Activated CD4-positive, alpha-beta memory T cell treated with anti-CD3 and anti-CD28 coated beads, Interleukin-2, amount 10 ng/mL, durations not matched to agents 7 days and 5 days (primary cell): ENCODE measurements at regions of chr2 and their contacts with region 1.

Region 1: DNA sequence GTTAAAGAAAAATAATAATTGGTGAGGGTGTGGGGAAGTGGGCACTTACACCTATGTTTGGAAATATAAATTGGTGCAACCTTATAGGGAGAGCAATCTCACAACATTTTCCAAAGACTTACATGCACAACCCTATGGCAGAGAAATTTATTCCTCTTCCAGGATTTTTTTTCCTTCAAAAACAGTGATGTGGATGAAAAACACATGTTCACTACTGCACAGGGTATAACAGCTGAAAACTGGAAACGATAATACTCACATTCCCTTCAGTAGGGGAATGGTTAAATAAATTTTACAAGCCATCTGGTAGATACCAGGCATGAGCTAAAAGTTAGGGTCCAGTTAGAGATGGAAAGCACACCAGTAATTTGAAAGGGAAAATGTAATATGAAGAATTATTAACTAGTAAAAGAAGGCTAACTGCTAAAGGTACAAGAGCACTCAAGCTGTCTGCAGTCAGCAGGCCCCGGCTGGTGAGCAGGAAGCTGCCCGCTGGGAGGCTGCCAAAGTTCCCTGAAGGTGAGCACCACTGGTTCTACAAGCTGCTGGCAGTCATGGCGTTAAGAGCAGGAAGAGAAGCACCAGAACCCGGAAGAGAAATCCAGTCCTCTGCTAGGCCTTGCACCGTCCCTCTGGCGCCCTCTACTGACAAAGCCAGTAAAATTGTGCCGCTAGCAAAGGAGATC is 28.4 kb upstream of the CASP8 start:
- DNase-seq: peak; percentile 92
- H3K4me3 Mint-ChIP-seq: peak overlapping the region; percentile 97
- H3K27ac Mint-ChIP-seq: peak overlapping the region; percentile 97
- H3K4me1 Mint-ChIP-seq: peaks cover 58% of the 10 kb centered on the region
- H3K27me3 Mint-ChIP-seq: no peaks in the 10 kb centered on the region

Region 2: DNA sequence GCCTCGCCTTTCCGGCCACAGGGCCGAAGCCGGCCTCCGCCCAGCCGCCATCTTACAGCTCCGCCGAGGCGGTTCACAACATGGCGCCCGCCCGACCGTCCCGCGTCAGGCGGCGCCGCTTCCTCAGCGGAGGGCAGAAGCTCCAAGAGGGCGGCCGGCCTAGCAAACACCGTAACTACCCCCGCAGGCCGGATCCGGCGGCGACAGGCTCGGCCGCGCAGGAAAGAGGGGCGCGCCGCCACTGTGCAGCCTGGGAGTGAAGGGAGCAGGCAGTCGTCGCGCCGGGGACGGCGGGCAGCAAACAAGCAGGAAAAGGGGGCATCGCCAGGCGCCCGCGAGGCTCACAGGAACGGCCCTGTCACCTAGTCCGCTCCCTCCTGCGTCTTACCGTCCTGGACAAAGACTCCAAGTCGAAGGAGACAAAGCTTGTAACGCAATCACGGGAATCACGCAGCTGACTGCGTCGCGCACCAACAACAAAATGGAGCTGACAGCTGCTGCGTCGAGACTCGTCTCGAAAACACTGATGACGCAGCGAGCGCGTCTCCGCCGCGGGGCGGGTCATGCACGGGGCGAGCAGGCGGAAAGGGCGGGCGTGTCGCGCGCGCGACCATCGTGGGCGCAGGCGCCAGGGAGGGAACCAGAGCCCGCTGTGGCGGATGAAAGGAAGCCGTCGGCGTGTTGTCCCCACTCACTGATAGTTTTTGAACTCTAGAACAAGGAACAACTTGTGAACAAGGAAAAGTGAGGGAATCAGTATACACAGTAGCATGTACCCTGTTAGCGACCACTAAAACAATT is 367.5 kb before region 1 on chr2 and contains the start of gene CLK1:
- CTCF ChIA-PET with region 1: interaction called, 5 read pairs
- POLR2A ChIA-PET with region 1: interaction called, 43 read pairs
- DNase-seq: peak; percentile 97
- H3K4me3 Mint-ChIP-seq: peak within 1 kb of the TSS; percentile 94
- H3K27ac Mint-ChIP-seq: peak within 1 kb of the TSS; percentile 100
- H3K4me1 Mint-ChIP-seq: peaks cover 53% of the 10 kb centered on the region
- H3K27me3 Mint-ChIP-seq: no peaks in the 10 kb centered on the region
- total RNA-seq, gene CLK1: 164 to 169 TPM

Region 3: GRCh38 chr2:200963124-200963917 is 268.6 kb before region 1 on chr2 and contains the start of gene ORC2:
- CTCF ChIA-PET with region 1: interaction called, 12 read pairs
- POLR2A ChIA-PET with region 1: interaction called, 10 read pairs
- DNase-seq: peak; percentile 93
- H3K4me3 Mint-ChIP-seq: peak within 1 kb of the TSS; percentile 92
- H3K27ac Mint-ChIP-seq: peak within 1 kb of the TSS; percentile 86
- H3K4me1 Mint-ChIP-seq: peaks cover 72% of the 10 kb centered on the region
- H3K27me3 Mint-ChIP-seq: no peaks in the 10 kb centered on the region
- total RNA-seq, gene ORC2: 50.8 to 51.6 TPM

Region 4: DNA sequence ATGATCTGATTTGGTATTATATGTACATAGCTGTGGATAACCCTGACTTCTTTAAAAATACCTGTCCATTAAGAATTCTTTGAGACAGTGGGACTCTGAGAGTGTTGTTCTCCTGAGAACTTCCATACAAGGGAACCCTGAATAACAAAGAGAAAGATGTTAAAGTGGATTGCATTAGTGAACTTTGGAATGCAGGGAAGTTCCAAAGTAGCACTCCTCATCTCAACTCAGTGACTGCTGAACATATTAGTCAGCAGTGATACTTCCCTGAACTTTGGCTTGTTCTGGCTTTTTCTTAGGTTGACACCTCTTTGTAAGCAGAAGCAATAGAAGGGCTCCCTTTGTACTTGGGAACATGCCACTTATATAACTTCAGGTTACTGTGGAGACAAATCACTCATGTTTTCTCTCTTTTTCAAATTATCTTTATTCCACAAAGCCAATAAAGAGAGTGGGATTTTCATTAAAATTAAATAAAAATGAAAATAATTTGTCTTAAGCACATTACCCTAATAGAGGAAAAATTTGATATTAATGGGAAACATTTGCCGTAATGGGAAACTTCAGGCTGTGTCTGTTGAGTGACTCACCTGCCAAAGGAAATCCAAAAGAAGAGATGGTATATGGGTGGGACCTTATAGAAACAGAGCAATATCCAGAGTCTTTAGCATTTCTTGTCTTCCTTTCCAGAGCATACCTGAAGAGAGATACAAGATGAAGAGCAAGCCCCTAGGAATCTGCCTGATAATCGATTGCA is 82.7 kb before region 1 on chr2:
- CTCF ChIA-PET with region 1: interaction called, 12 read pairs
- POLR2A ChIA-PET with region 1: interaction called, 3 read pairs
- DNase-seq: no peak
- H3K4me3 Mint-ChIP-seq: no peak overlapping the region
- H3K27ac Mint-ChIP-seq: peak overlapping the region; percentile 38
- H3K4me1 Mint-ChIP-seq: peaks cover 31% of the 10 kb centered on the region
- H3K27me3 Mint-ChIP-seq: no peaks in the 10 kb centered on the region

Region 5: DNA sequence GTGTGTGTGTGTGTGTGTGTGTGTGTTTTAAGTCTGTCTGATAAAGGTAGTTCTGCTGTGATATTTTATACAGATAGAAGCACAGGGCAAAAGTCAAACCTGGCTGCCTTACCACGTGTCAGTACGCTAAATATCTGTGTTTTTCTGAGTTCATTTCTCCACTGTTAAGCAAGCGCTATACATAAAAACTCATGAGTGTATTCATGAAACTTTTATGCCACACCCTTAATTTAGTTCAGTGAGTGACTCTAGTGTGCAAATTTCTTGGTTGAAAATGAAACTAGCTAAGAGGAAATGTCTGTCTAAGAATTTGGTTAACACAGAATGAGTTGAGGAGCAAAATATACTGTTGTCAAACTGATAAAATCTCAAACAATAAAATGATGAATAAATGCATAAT is 37.8 kb before region 1 on chr2:
- CTCF ChIA-PET with region 1: interaction called, 76 read pairs
- POLR2A ChIA-PET with region 1: interaction called, 39 read pairs
- DNase-seq: no peak
- H3K4me3 Mint-ChIP-seq: peak overlapping the region; percentile 54
- H3K27ac Mint-ChIP-seq: peak overlapping the region; percentile 87
- H3K4me1 Mint-ChIP-seq: peaks cover 74% of the 10 kb centered on the region
- H3K27me3 Mint-ChIP-seq: no peaks in the 10 kb centered on the region

Region 6: DNA sequence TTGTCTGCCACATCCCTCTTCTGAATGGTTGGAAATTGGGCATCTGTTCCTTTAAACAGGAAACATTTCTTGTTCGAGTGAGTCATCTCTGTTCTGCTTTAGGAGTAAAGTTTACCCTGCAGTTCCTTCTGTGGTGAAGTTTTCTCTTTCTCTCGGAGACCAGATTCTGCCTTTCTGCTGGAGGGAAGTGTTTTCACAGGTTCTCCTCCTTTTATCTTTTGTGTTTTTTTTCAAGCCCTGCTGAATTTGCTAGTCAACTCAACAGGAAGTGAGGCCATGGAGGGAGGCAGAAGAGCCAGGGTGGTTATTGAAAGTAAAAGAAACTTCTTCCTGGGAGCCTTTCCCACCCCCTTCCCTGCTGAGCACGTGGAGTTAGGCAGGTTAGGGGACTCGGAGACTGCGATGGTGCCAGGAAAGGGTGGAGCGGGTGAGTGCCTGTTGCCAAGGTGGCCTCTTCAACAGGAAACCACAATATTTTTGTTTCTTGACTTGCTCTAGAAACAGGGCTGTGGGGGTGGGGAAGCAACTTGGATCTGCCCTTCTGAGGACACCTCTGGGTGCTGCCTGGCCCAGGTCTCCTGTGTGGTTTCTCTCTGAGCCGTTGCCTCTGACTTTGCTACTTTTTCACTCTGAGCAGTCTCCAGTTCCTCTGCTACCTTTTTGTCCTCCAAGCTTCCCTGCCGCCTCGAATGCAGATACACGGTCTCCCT is 26.2 kb after region 1 on chr2:
- CTCF ChIA-PET with region 1: interaction called, 105 read pairs
- POLR2A ChIA-PET with region 1: interaction called, 290 read pairs
- DNase-seq: peak; percentile 96
- H3K4me3 Mint-ChIP-seq: peak overlapping the region; percentile 81
- H3K27ac Mint-ChIP-seq: peak overlapping the region; percentile 98
- H3K4me1 Mint-ChIP-seq: peaks cover 68% of the 10 kb centered on the region
- H3K27me3 Mint-ChIP-seq: no peaks in the 10 kb centered on the region

Region 7: DNA sequence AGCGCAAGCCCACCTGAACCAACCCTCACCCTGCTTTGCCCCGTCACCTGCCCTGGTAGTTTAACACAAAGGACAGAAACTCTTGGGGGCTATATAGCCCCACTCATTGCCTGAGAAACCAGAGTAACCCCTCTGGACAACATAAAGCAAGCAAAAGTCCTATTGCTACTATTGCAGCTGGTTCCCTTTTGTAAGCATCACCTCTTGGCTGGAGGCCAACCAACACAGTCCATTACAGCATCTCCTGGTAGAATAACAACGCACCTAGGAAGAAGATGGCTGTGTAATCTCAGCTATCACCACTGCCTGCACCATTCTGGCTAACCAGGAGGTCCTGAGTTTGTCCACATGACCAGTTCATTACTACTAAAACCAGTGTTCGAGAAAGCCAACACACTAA is 88.8 kb after region 1 on chr2:
- CTCF ChIA-PET with region 1: no interaction called
- POLR2A ChIA-PET with region 1: no interaction called
- DNase-seq: no peak
- H3K4me3 Mint-ChIP-seq: no peak overlapping the region
- H3K27ac Mint-ChIP-seq: no peak overlapping the region
- H3K4me1 Mint-ChIP-seq: no peaks in the 10 kb centered on the region
- H3K27me3 Mint-ChIP-seq: no peaks in the 10 kb centered on the region

Region 8: DNA sequence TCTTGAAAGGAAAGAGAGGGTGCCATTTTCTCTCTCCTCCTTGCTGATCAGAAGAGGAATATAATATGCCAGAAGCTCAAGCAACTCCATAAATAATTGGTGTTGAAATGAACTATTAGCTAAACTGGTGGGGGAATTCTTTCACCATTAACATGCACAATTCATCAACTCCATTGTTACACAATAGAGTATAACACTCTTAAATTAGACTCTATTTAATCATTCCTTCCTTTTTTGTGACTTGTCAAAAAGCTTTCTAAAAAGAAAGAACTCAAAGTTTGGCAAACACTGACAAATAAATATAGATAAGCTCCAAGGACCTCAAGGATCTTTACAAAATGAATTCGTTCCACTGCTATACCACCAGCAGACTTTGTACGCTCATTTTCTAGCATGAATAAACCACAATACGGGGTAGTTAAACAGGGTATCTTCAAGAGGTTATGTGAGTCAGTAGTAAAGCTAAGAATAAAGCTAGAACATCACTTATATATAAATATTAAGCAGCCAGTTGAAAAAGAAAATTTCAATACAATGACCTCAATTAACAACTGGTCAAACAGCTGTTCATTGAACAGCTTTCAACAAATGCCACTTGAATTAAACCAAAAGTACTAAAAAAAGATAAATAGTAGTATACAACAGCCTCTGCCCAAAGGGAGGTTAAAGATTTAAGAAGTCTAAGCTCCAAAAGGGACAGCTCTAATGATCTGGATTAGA is 213.0 kb after region 1 on chr2:
- CTCF ChIA-PET with region 1: interaction called, 12 read pairs
- POLR2A ChIA-PET with region 1: interaction called, 24 read pairs
- DNase-seq: no peak
- H3K4me3 Mint-ChIP-seq: no peak overlapping the region
- H3K27ac Mint-ChIP-seq: no peak overlapping the region
- H3K4me1 Mint-ChIP-seq: peaks cover 44% of the 10 kb centered on the region
- H3K27me3 Mint-ChIP-seq: no peaks in the 10 kb centered on the region